ENCODE measurements at regions of chr17 and their contacts with region 1.

Region 1: GRCh38 chr17:39980351-39981206 is at the start of gene PSMD3:
- DNase-seq: peak; percentile 96 to 99
- ATAC-seq: peak; percentile 95 to 98 (median 98)
- H3K4me3 ChIP-seq: peak within 1 kb of the TSS; percentile 85 to 100 (median 96)
- H3K27ac ChIP-seq: peak within 1 kb of the TSS; percentile 70 to 97 (median 95)
- H3K4me1 ChIP-seq: peaks cover 5 to 38% (median 23%) of the 10 kb centered on the region in 9 donors
- H3K27me3 ChIP-seq: peaks cover 0 to 9% (median 0%) of the 10 kb centered on the region in 7 donors
- CTCF ChIP-seq: peak; percentile 67 to 92 (median 82)
- total RNA-seq, gene PSMD3: 76.5 to 113 (median 81.8) TPM

Region 2: GRCh38 chr17:39863918-39864746 is 116.4 kb before region 1 on chr17 and contains the start of gene IKZF3:
- intact Hi-C with region 1: loop called in 1 of 10 experiments (anchors 10 kb)
- DNase-seq: peak; percentile 34 to 62
- ATAC-seq: peak; percentile 62 to 92 (median 75)
- H3K4me3 ChIP-seq: peak within 1 kb of the TSS in 6 of 10 donors; percentile 5 to 57 (median 14)
- H3K27ac ChIP-seq: peak within 1 kb of the TSS in 1 of 10 donors; percentile 79
- H3K4me1 ChIP-seq: peaks cover 0 to 33% (median 7%) of the 10 kb centered on the region in 9 donors
- H3K27me3 ChIP-seq: peaks cover 14 to 100% (median 99%) of the 10 kb centered on the region in 7 donors
- CTCF ChIP-seq: peak in 5 of 9 donors; percentile 16 to 48 (median 32)
- total RNA-seq, gene IKZF3: 0.11 to 5.0 (median 0.31) TPM

Region 3: DNA sequence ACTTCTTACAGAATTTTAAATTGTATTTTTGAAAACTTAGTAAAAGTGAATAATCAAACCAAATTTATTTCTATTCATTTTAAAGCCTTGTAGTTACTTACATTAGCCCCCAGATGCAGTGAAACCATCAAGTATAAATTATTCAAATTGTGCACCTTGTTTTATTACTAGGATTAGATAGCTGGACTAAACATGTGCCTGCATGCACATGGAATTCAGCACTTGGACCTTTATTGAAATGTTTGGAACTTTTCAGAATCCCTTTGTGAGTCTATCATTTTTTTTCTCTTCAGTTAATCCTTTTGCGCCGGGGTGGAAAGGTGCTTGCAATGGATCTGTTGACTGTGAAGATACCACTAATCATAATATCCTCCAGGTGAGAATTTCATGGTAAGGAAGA is 107.8 kb before region 1 on chr17:
- intact Hi-C with region 1: loop called in 5 of 10 experiments (anchors 2 to 10 kb)
- DNase-seq: no peak
- ATAC-seq: no peak
- H3K4me3 ChIP-seq: no peak overlapping the region
- H3K27ac ChIP-seq: no peak overlapping the region
- H3K4me1 ChIP-seq: no peaks in the 10 kb centered on the region
- H3K27me3 ChIP-seq: peaks cover 0 to 55% (median 34%) of the 10 kb centered on the region in 7 donors
- CTCF ChIP-seq: peak in 5 of 9 donors; percentile 8 to 58 (median 32)

Region 4: GRCh38 chr17:39889200-39889599 is 91.4 kb before region 1 on chr17:
- intact Hi-C with region 1: loop called in 1 of 10 experiments (anchors 10 kb)
- DNase-seq: no peak
- ATAC-seq: no peak
- H3K4me3 ChIP-seq: no peak overlapping the region
- H3K27ac ChIP-seq: no peak overlapping the region
- H3K4me1 ChIP-seq: no peaks in the 10 kb centered on the region
- H3K27me3 ChIP-seq: peaks cover 0 to 59% (median 31%) of the 10 kb centered on the region in 7 donors
- CTCF ChIP-seq: no peak

Region 5: GRCh38 chr17:39927101-39927928 is 53.3 kb before region 1 on chr17 and contains the starts of genes LRRC3C and ORMDL3:
- intact Hi-C with region 1: loop called in 3 of 10 experiments (anchors 1 to 2 kb)
- DNase-seq: peak; percentile 95
- ATAC-seq: peak; percentile 87 to 95 (median 92)
- H3K4me3 ChIP-seq: peak within 1 kb of the TSS; percentile 50 to 85 (median 72)
- H3K27ac ChIP-seq: peak within 1 kb of the TSS; percentile 85 to 98 (median 92)
- H3K4me1 ChIP-seq: peaks cover 6 to 71% (median 58%) of the 10 kb centered on the region in 9 donors
- H3K27me3 ChIP-seq: no peaks in the 10 kb centered on the region
- CTCF ChIP-seq: no peak
- total RNA-seq, gene LRRC3C: not detected
- total RNA-seq, gene ORMDL3: 33.5 to 94.3 (median 66.8) TPM

Region 6: GRCh38 chr17:39952680-39953470 is 27.7 kb before region 1 on chr17:
- intact Hi-C with region 1: loop called in 2 of 10 experiments (anchors 1 to 2 kb)
- DNase-seq: peak; percentile 99 to 100
- ATAC-seq: peak; percentile 91 to 96 (median 94)
- H3K4me3 ChIP-seq: peak overlapping the region in 9 of 10 donors; percentile 35 to 56 (median 51)
- H3K27ac ChIP-seq: peak overlapping the region in 9 of 10 donors; percentile 54 to 76 (median 63)
- H3K4me1 ChIP-seq: peaks cover 0 to 31% (median 11%) of the 10 kb centered on the region in 9 donors
- H3K27me3 ChIP-seq: no peaks in the 10 kb centered on the region
- CTCF ChIP-seq: no peak

Region 7: GRCh38 chr17:39963829-39964228 is 16.8 kb before region 1 on chr17:
- intact Hi-C with region 1: loop called in 6 of 10 experiments (anchors 1 to 2 kb)
- DNase-seq: no peak
- ATAC-seq: no peak
- H3K4me3 ChIP-seq: no peak overlapping the region
- H3K27ac ChIP-seq: no peak overlapping the region
- H3K4me1 ChIP-seq: peaks cover 0 to 27% (median 3%) of the 10 kb centered on the region in 9 donors
- H3K27me3 ChIP-seq: peaks cover 0 to 25% (median 0%) of the 10 kb centered on the region in 7 donors
- CTCF ChIP-seq: no peak

Region 8: GRCh38 chr17:40026816-40027613 is 46.4 kb after region 1 on chr17:
- intact Hi-C with region 1: no loop called
- DNase-seq: peak; percentile 78 to 87
- ATAC-seq: peak; percentile 87 to 94 (median 91)
- H3K4me3 ChIP-seq: no peak overlapping the region
- H3K27ac ChIP-seq: peak overlapping the region in 2 of 10 donors; percentile 18 to 31
- H3K4me1 ChIP-seq: peaks cover 8 to 38% (median 16%) of the 10 kb centered on the region in 9 donors
- H3K27me3 ChIP-seq: no peaks in the 10 kb centered on the region
- CTCF ChIP-seq: peak; percentile 91 to 97 (median 95)

Measured in heart right ventricle (tissue), 16 donors.